Head of caudate nucleus (tissue), 42 donors: ENCODE measurements at regions of chr11 and their contacts with region 1.

Region 1: DNA sequence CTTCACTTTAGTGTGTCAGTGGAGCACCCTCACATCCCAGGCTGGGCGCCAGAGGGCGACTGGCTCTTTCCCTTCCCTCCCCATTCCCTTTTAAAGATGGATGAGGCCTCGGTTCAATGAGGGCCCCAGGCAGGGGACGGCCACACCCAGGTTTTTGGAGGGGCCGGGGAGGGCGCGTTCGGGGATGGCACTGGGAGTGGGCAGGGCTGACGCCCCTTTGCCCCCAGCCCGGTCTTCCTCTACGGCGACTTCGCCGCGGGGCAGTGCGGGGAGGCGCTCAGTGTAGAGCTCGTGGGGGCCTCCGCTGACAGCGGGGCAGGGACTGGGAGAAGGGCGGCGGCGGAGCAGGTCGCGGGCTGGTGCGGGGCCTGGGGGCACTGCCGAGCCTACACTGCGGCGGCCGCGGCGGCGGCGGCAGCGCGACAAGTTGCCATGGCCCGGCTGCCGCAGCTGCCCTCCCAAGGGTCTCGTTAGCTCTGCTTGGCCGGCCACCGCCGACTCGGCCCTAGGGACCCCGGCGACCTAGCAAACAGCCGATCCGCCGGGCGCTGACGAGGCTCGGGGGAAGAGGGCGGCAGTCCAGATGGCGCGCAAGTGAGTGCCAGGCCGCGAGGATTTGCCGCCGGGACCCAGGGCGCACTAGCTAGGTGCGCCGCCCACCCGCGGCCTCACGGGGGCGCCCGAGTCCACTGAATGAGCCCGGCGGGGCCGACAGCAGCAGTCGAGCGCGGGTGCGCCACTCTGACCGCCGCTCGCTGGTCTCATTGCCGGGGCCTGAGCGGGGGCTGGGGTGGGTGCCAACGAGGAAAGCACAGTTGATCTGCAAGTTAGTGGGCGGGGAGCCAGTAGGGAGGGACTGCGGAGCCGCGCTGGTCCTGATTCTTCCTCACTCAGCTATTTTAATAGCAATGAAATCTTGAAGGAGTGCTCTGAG is 92.7 kb downstream of the RRM1 start:
- DNase-seq: peak; percentile 74 to 96 (median 90)

Region 2: GRCh38 chr11:4044976-4045646 is 142.2 kb before region 1 on chr11:
- intact Hi-C with region 1: no loop called
- DNase-seq: peak; percentile 43 to 91 (median 79)

Region 3: GRCh38 chr11:4496557-4497275 is 309.4 kb after region 1 on chr11:
- intact Hi-C with region 1: loop called (anchors 5 kb)
- DNase-seq: no peak

Region 4: DNA sequence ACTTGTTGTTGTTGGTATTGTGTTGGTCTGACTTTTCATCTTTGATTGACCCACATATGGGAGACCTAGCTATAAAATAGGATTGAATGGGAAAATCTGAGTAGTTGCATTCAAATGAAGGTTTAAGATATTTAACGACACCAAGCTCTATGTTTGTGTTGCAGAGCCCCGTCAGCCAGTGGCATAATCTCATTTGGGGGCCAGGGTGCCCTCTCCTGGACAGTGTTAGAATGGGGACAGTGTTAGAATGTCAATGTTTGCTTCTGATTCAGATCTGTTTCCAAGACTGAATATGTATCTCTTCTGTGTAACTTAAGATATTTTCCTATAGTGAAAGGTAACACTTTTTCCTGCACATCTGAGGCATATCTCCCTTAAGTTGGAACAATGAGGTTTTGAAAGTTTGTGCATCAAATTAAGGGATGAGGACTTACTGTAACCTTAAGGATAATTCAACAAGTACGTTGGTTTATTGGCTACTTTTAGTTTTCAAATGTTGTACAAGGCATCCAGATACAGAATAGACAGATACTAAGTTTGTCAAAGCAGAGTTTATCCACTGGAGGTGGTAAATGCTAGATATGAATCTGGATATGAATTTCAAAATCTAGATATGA is 352.4 kb after region 1 on chr11:
- intact Hi-C with region 1: loop called (anchors 5 kb)
- DNase-seq: peak; percentile 14 to 85 (median 66)

Region 5: DNA sequence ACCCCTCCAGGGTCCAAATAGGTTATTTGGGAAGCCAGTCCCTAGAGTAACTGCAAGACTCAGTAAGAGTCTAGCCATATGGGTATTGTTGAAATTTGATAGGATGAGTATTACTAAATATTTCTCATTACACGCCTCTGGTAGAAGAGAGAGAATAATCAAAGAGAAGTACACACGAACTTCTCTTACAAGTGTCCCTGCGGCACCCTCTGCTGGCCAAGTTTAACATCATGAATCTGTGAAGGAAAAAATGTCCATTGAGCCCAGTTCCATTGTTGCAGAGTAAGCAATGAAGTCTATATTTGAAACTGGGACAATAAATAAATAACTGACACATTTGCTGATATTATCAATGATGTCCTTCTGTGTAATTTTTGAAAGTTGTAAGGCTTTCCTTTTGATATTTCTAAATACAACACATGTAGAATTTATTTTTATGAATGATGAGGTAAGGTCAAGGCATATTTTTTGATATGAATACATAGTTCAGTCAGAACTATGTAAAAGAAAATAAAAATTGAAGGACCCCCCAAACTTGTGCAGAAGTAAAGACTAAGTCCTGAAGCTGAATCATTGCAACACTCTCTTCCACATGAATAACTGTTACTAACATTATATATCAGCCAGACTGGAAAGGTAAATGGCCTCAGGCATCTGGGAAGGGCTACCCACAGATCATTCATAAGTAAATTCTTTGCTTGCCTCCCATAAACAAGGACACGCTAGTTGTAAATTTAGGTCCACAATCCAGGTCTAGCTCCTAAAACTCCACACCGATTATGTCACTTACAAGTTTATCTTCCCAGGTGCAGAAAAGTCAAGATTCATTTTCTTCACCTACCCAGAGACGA is 817.3 kb after region 1 on chr11:
- intact Hi-C with region 1: loop called (anchors 10 kb)
- DNase-seq: peak; percentile 16 to 82 (median 60)